Left ventricle myocardium inferior (tissue), 1 donor: ENCODE measurements at regions of chr15 and their contacts with region 1.

Region 1: DNA sequence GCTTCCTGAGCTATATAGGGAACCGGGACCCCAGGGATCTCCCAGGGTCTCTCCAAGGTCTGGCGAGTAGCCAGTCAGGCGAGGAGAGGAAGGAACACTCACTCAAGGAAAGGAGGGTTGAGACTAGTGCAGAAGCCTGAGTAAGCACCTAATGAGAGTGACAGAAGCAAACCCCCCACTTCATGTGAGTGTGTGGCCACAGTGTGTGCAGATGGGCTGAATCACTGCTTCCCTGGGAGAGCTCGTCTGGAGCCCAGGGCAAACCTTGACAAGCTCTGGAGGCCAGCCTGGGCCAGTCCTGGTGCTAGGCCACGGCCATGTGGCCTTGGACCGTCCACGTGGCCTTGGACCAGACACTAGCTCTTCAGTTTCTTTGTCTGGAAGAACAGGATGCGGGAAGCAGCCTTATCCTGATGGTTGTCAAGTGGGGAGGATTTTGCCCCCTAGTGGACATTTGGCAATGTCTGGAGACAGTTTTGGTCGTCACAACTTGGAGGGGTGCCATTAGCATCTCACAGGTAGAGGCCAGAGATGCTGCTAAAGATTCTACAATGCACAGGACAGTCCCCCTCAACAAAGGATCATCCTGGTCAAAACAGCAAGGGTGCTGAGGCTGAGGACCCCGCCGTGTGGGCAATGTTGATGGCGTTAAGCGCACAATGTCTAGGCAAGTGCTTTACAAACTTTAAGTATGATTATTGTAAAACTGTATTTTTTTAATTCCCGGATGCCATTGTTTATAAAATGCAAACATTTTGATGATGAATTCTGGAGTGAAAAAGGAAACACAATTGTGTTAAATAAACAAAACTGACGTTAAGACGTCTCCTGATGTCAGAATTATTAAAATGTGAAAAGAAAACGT is 34.8 kb upstream of the CTSH start:
- DNase-seq: peak; percentile 29
- H3K4me3 ChIP-seq: no peak overlapping the region
- H3K27ac ChIP-seq: no peak overlapping the region
- H3K4me1 ChIP-seq: peaks cover 8% of the 10 kb centered on the region
- H3K27me3 ChIP-seq: no peaks in the 10 kb centered on the region
- CTCF ChIP-seq: peak; percentile 79

Region 2: GRCh38 chr15:78909791-78910228 is 69.9 kb before region 1 on chr15:
- intact Hi-C with region 1: loop called (anchors 5 kb)
- DNase-seq: no peak
- H3K4me3 ChIP-seq: no peak overlapping the region
- H3K27ac ChIP-seq: no peak overlapping the region
- H3K4me1 ChIP-seq: peaks cover 63% of the 10 kb centered on the region
- H3K27me3 ChIP-seq: no peaks in the 10 kb centered on the region
- CTCF ChIP-seq: peak; percentile 71